HepG2 (cell line): ENCODE measurements at regions of chr20 and their contacts with region 1.

Region 1: GRCh38 chr20:25750765-25751696 is 54.4 kb upstream of the ZNF337 start:
- DNase-seq: peak; percentile 70
- ATAC-seq: peak; percentile 96
- H3K4me3 ChIP-seq: peak overlapping the region; percentile 62 to 85 (median 74)
- H3K27ac ChIP-seq: peak overlapping the region; percentile 19
- H3K4me1 ChIP-seq: peaks cover 24% of the 10 kb centered on the region
- H3K27me3 ChIP-seq: no peaks in the 10 kb centered on the region; a peak in 1 of 5 replicates
- CTCF ChIP-seq: no peak
- EP300 ChIP-seq: no peak
- POLR2A ChIP-seq: peak; percentile 73 to 95
- RAD21 ChIP-seq: no peak

Region 2: GRCh38 chr20:25685276-25686080 is 65.6 kb before region 1 on chr20:
- CTCF ChIA-PET with region 1: no interaction called
- POLR2A ChIA-PET with region 1: no interaction called
- in situ Hi-C with region 1: no loop called
- intact Hi-C with region 1: no loop called
- DNase-seq: no peak
- ATAC-seq: peak; percentile 85
- H3K4me3 ChIP-seq: no peak overlapping the region
- H3K27ac ChIP-seq: no peak overlapping the region
- H3K4me1 ChIP-seq: no peaks in the 10 kb centered on the region
- H3K27me3 ChIP-seq: no peaks in the 10 kb centered on the region
- CTCF ChIP-seq: no peak
- EP300 ChIP-seq: no peak
- POLR2A ChIP-seq: no peak
- RAD21 ChIP-seq: no peak

Region 3: DNA sequence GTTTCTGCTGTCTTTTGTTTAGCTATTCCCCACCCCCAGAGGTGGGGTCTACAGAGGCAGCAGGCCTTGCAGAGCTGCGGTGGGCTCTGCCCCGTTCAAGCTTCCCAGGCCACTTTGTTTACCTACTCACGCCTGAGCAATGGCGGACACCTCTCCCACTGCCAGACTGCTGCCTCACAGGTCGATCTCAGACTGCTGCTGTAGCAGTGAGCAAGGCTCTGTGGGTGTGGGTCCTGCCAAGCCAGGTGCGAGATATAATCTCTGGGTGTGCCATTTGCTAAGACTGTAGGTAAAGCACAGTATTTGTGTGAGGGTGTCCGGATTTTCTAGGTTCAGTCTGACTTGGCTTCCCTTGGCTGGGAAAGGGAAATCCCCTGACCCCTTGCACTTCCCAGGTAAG is 30.7 kb before region 1 on chr20:
- CTCF ChIA-PET with region 1: no interaction called
- POLR2A ChIA-PET with region 1: interaction called, 6 read pairs
- in situ Hi-C with region 1: no loop called
- intact Hi-C with region 1: loop called (anchors 1 kb)
- DNase-seq: no peak
- ATAC-seq: peak; percentile 32; the same call in 2 of the 3 replicates
- H3K4me3 ChIP-seq: no peak overlapping the region
- H3K27ac ChIP-seq: no peak overlapping the region
- H3K4me1 ChIP-seq: peaks cover 26% of the 10 kb centered on the region
- H3K27me3 ChIP-seq: no peaks in the 10 kb centered on the region
- CTCF ChIP-seq: no peak
- EP300 ChIP-seq: no peak
- POLR2A ChIP-seq: no peak
- RAD21 ChIP-seq: no peak

Region 4: GRCh38 chr20:25865380-25866118 is 114.5 kb after region 1 on chr20:
- CTCF ChIA-PET with region 1: no interaction called
- POLR2A ChIA-PET with region 1: no interaction called
- in situ Hi-C with region 1: no loop called
- intact Hi-C with region 1: loop called (anchors 5 kb)
- DNase-seq: peak; percentile 73
- ATAC-seq: peak; percentile 51
- H3K4me3 ChIP-seq: peak overlapping the region; percentile 47 to 79 (median 53); a peak in 5 of 6 replicates
- H3K27ac ChIP-seq: no peak overlapping the region
- H3K4me1 ChIP-seq: peaks cover 64% of the 10 kb centered on the region
- H3K27me3 ChIP-seq: peaks cover 17 to 91% of the 10 kb centered on the region in 2 experiments
- CTCF ChIP-seq: no peak
- EP300 ChIP-seq: no peak
- POLR2A ChIP-seq: no peak
- RAD21 ChIP-seq: no peak